GM18951 (cell line): ENCODE measurements at regions of chr18 and their contacts with region 1.

Region 1: GRCh38 chr18:616380-616995 is 19.7 kb downstream of the CLUL1 start:
- POLR2A ChIP-seq: no peak

Region 2: DNA sequence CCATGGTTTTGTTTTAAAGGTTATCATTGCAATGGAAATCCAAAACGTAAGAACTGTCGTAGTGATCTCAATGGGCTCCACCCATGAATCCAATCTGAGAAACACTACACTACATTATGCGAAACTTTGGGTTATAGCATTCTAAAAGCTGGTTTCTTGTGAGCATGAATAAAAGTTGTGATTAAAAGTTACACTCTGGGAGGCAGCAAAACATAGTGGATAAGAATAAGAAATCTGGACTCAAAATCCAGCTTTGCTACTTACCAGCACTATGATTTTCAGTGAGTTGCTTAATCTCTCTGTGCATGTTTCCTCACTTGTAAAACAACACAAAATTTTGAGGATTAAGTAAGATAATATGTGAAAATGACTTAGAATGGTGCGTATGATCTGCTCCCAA is 323.0 kb before region 1 on chr18:
- in situ Hi-C with region 1: no loop called
- POLR2A ChIP-seq: no peak

Region 3: DNA sequence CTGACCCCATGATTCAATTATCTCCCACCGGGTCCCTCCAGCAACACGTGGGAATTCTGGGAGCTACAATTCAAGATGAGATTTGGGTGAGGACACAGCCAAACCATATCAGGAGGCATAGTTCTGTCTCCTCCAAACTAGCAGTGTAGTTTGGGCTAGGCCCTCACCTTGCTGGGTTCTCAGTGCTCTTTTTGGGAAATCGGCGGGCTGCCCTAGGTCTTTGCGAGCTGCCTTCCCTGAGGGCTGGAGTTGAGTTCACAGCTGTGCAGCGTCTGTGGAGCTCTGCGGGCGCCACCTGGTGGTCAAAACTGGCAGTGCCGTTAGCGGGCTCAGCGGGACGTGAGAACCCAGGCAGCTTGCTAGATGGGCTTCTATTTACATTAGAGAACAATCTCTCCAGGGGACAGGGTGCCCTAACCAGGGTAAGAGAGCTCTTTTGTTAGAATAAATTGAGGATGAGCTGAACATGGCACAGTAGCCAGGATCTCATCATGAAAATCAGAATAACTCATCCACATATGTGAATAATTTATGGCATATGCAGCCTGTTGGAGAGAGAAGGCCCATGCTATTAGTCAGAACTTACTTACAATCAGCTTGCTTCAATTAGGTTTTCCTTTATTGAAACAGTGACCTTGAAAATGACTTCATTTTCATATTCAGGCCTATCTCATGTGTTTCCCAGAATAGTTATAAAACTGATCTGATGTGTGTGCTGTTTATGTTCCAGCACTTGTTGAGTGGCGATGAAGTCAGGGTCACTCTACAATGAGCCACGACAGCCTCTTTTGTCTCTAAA is 222.9 kb after region 1 on chr18:
- in situ Hi-C with region 1: loop called (anchors 10 kb)
- POLR2A ChIP-seq: no peak